MCF 10A (cell line): ENCODE measurements at regions of chr5 and their contacts with region 1.

Region 1: GRCh38 chr5:7927466-7928375 is 58.8 kb downstream of the MTRR start:
- DNase-seq: peak; percentile 65
- H3K4me3 Mint-ChIP-seq: no peak overlapping the region
- H3K27ac Mint-ChIP-seq: no peak overlapping the region
- H3K4me1 Mint-ChIP-seq: no peaks in the 10 kb centered on the region
- H3K27me3 Mint-ChIP-seq: peaks cover 10% of the 10 kb centered on the region
- CTCF ChIP-seq: peak; percentile 63

Region 2: DNA sequence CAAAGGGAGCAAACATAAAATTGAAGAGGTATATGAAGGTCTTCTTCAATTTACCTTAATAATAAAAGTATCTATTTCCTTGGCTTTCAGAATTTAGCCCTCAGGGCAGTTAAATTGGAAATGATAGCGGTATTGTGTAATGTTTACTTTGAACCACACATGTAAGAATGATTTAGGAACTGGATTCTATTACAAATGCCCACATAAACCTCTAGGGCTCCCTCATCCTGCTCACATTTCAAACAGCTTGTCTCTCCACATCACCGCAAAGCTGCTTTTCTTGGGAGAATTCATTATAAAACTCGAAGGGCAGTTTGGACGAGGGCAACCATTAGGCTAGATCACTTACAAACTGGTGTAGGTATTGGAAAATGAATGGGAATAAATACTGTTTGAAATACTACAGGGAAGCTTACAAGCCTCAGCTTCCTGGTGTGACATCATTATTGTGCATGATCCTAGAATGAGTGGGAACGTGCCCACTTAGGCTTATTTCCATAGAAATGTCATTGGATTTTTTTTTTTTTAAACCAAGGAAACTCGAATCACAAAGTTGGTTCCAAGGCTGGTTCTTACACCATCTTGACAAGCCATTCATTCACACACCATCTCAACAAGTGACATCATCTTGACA is 11.4 kb before region 1 on chr5:
- CTCF ChIA-PET with region 1: interaction called, 16 read pairs
- POLR2A ChIA-PET with region 1: no interaction called
- intact Hi-C with region 1: no loop called
- DNase-seq: peak; percentile 18
- H3K4me3 Mint-ChIP-seq: no peak overlapping the region
- H3K27ac Mint-ChIP-seq: no peak overlapping the region
- H3K4me1 Mint-ChIP-seq: peaks cover 7% of the 10 kb centered on the region
- H3K27me3 Mint-ChIP-seq: no peaks in the 10 kb centered on the region
- CTCF ChIP-seq: no peak

Region 3: GRCh38 chr5:7941692-7942091 is 14.0 kb after region 1 on chr5:
- CTCF ChIA-PET with region 1: interaction called, 38 read pairs
- POLR2A ChIA-PET with region 1: no interaction called
- intact Hi-C with region 1: no loop called
- DNase-seq: no peak
- H3K4me3 Mint-ChIP-seq: no peak overlapping the region
- H3K27ac Mint-ChIP-seq: no peak overlapping the region
- H3K4me1 Mint-ChIP-seq: no peaks in the 10 kb centered on the region
- H3K27me3 Mint-ChIP-seq: peaks cover 11% of the 10 kb centered on the region
- CTCF ChIP-seq: no peak

Region 4: DNA sequence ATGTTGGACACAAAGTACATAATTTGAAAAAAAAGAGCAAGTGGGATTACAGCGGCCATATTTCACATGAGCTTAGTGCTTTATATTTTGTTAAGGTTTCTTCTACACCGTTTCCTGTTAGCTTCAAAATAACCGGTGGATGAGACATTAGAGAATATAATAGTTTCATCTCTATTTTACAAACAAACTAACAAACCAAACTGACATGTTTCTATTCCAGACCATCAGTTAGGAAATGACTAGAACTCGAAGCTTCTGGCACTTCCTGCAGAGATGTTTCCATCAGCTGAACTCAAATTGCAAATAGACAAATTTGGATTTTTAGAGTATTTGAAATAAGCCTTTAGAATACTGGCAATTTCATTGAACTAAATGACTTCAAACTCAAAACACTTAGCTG is 27.8 kb after region 1 on chr5:
- CTCF ChIA-PET with region 1: interaction called, 18 read pairs
- POLR2A ChIA-PET with region 1: interaction called, 3 read pairs
- intact Hi-C with region 1: no loop called
- DNase-seq: no peak
- H3K4me3 Mint-ChIP-seq: no peak overlapping the region
- H3K27ac Mint-ChIP-seq: no peak overlapping the region
- H3K4me1 Mint-ChIP-seq: no peaks in the 10 kb centered on the region
- H3K27me3 Mint-ChIP-seq: no peaks in the 10 kb centered on the region
- CTCF ChIP-seq: no peak

Region 5: GRCh38 chr5:8247049-8247899 is 319.6 kb after region 1 on chr5:
- CTCF ChIA-PET with region 1: interaction called, 10 read pairs
- POLR2A ChIA-PET with region 1: no interaction called
- intact Hi-C with region 1: no loop called
- DNase-seq: no peak
- H3K4me3 Mint-ChIP-seq: no peak overlapping the region
- H3K27ac Mint-ChIP-seq: no peak overlapping the region
- H3K4me1 Mint-ChIP-seq: no peaks in the 10 kb centered on the region
- H3K27me3 Mint-ChIP-seq: peaks cover 23% of the 10 kb centered on the region
- CTCF ChIP-seq: peak; percentile 14

Region 6: GRCh38 chr5:8270246-8270645 is 342.5 kb after region 1 on chr5:
- CTCF ChIA-PET with region 1: no interaction called
- POLR2A ChIA-PET with region 1: no interaction called
- intact Hi-C with region 1: no loop called
- DNase-seq: peak; percentile 6
- H3K4me3 Mint-ChIP-seq: no peak overlapping the region
- H3K27ac Mint-ChIP-seq: no peak overlapping the region
- H3K4me1 Mint-ChIP-seq: no peaks in the 10 kb centered on the region
- H3K27me3 Mint-ChIP-seq: no peaks in the 10 kb centered on the region
- CTCF ChIP-seq: no peak

Region 7: GRCh38 chr5:8340739-8341344 is 413.1 kb after region 1 on chr5:
- CTCF ChIA-PET with region 1: interaction called, 3 read pairs
- POLR2A ChIA-PET with region 1: no interaction called
- intact Hi-C with region 1: loop called (anchors 5 kb)
- DNase-seq: peak; percentile 22
- H3K4me3 Mint-ChIP-seq: peak overlapping the region; percentile 38
- H3K27ac Mint-ChIP-seq: no peak overlapping the region
- H3K4me1 Mint-ChIP-seq: peaks cover 9% of the 10 kb centered on the region
- H3K27me3 Mint-ChIP-seq: no peaks in the 10 kb centered on the region
- CTCF ChIP-seq: peak; percentile 54